ENCODE measurements at regions of chr22 and their contacts with region 1.

Region 1: GRCh38 chr22:42662114-42663021 is 13.2 kb upstream of the CYB5R3 start:
- DNase-seq: peak; percentile 68
- H3K4me3 Mint-ChIP-seq: peak overlapping the region; percentile 69
- H3K27ac Mint-ChIP-seq: no peak overlapping the region
- H3K4me1 Mint-ChIP-seq: no peaks in the 10 kb centered on the region
- H3K27me3 Mint-ChIP-seq: peaks cover 13% of the 10 kb centered on the region

Region 2: GRCh38 chr22:42596336-42596735 is 66.0 kb before region 1 on chr22:
- intact Hi-C with region 1: no loop called
- DNase-seq: no peak
- H3K4me3 Mint-ChIP-seq: no peak overlapping the region
- H3K27ac Mint-ChIP-seq: no peak overlapping the region
- H3K4me1 Mint-ChIP-seq: no peaks in the 10 kb centered on the region
- H3K27me3 Mint-ChIP-seq: no peaks in the 10 kb centered on the region

Region 3: GRCh38 chr22:42621505-42622002 is 40.8 kb before region 1 on chr22:
- intact Hi-C with region 1: loop called (anchors 5 kb)
- DNase-seq: peak; percentile 32
- H3K4me3 Mint-ChIP-seq: no peak overlapping the region
- H3K27ac Mint-ChIP-seq: peak overlapping the region; percentile 26
- H3K4me1 Mint-ChIP-seq: peaks cover 6% of the 10 kb centered on the region
- H3K27me3 Mint-ChIP-seq: no peaks in the 10 kb centered on the region

Region 4: GRCh38 chr22:42680648-42681047 is 18.3 kb after region 1 on chr22:
- intact Hi-C with region 1: no loop called
- DNase-seq: no peak
- H3K4me3 Mint-ChIP-seq: no peak overlapping the region
- H3K27ac Mint-ChIP-seq: no peak overlapping the region
- H3K4me1 Mint-ChIP-seq: no peaks in the 10 kb centered on the region
- H3K27me3 Mint-ChIP-seq: peaks cover 9% of the 10 kb centered on the region

Region 5: DNA sequence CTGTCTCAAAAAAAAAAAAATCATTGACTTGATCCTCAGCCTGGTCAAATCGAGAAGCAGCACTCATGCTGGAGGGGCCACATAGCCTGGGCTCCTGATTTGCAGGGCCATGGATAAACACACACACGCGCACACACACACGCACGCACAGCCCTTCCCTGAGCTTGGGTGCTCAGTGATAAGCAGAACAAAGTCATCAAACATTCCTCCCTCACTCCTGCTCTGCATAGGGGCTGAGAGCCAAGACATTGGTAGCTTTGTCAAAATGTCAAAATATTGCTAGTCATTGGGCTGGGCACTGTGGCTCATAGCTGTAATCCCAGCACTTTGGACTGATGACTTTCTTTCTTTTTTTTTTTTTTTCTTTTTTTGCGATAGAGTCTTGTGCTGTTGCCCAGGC is 92.3 kb after region 1 on chr22:
- intact Hi-C with region 1: no loop called
- DNase-seq: no peak
- H3K4me3 Mint-ChIP-seq: no peak overlapping the region
- H3K27ac Mint-ChIP-seq: no peak overlapping the region
- H3K4me1 Mint-ChIP-seq: no peaks in the 10 kb centered on the region
- H3K27me3 Mint-ChIP-seq: peaks cover 5% of the 10 kb centered on the region

Region 6: DNA sequence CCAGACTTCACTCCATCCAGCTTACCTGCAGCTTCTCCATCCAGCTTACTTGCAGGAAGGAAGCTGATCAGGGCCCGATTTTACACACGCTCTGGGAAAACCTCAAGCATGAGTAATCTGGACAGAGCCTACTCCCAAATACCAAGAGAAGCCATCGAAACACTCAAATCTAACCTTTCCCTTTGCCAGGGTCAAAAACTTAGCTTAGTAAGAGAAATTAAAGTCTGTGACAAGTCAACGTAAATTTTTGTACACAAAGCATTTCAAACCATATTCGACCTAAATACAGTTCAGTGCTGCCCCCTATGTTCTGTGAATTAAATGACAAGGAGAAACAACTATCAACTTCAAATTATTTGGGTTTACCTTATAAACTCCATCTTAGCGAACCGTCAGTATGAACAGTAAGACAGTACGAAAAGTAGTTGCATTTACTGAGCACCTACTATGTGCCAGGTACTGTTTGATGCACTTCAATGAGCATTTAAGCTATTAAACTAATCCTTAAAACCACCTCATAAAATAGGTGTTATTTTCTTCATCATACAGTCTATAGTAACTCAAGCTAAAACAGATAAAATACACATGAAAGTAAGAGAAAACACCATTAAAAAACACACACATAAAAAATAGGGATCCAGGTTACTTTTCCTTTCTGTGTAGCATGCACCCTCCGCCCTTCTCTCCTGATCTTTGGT is 157.8 kb after region 1 on chr22:
- intact Hi-C with region 1: loop called (anchors 1 kb)
- DNase-seq: no peak
- H3K4me3 Mint-ChIP-seq: no peak overlapping the region
- H3K27ac Mint-ChIP-seq: no peak overlapping the region
- H3K4me1 Mint-ChIP-seq: peaks cover 6% of the 10 kb centered on the region
- H3K27me3 Mint-ChIP-seq: no peaks in the 10 kb centered on the region

Measured in activated T-helper 1 cell treated with anti-CD3 and anti-CD28 coated beads, Interleukin-12 subunit alpha, Interleukin-12 subunit beta, Interleukin-2, Interleukin-4 antibody, amounts not matched to agents 30 ng/mL and 10 ng/mL and 1 ng/mL, durations not matched to agents 14 hours and 24 hours and 36 hours (primary cell).